Activated naive CD4-positive, alpha-beta T cell treated with anti-CD3 and anti-CD28 coated beads for 36 hours (primary cell): ENCODE measurements at regions of chr11 and their contacts with region 1.

Region 1: DNA sequence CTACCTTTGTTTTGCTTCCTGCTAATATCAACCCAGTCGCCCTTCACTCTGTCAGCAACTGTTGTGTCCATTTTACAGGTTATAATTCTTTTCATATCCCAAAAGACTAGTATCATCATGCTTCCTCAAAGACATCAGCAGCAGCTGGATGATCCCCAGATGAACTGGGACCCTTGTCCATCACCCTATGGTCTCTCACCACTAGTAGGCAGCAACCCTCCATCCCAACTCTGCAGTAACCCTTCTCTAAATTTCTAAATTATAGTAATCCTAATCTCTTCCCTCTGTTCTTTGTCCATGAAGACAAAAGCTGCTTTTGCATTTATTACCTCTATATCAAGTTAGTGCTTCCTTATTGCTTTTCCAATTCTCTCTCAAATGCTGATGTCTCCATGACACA is 1025.8 kb downstream of the FAM181B start:
- DNase-seq: peak; percentile 8
- H3K4me3 Mint-ChIP-seq: no peak overlapping the region
- H3K27ac Mint-ChIP-seq: no peak overlapping the region
- H3K4me1 Mint-ChIP-seq: no peaks in the 10 kb centered on the region
- H3K27me3 Mint-ChIP-seq: peaks cover 2% of the 10 kb centered on the region

Region 2: DNA sequence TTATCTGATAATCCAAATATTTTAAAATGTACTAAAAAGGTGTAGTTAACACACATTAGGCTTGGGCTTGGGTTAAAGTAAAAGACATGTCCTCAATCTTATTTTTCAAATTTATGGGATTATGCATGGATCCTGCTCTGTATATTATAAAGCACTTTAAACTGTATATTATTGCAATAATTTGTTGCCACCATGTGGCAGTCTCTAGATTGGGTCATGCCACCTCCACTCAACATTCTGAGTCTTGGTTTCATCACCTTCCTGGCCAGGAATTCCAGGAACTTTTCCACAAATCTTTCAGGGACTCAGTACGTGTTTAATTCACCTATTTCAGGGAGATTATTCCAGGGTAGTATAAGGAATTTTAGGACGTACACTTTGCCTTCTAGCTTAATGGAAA is 330.3 kb after region 1 on chr11:
- CTCF ChIA-PET with region 1: interaction called, 3 read pairs
- intact Hi-C with region 1: loop called (anchors 2 kb)
- DNase-seq: no peak
- H3K4me3 Mint-ChIP-seq: no peak overlapping the region
- H3K27ac Mint-ChIP-seq: no peak overlapping the region
- H3K4me1 Mint-ChIP-seq: no peaks in the 10 kb centered on the region
- H3K27me3 Mint-ChIP-seq: no peaks in the 10 kb centered on the region

Region 3: GRCh38 chr11:82229341-82229740 is 521.5 kb after region 1 on chr11:
- CTCF ChIA-PET with region 1: interaction called, 3 read pairs
- intact Hi-C with region 1: loop called (anchors 2 kb)
- DNase-seq: no peak
- H3K4me3 Mint-ChIP-seq: no peak overlapping the region
- H3K27ac Mint-ChIP-seq: no peak overlapping the region
- H3K4me1 Mint-ChIP-seq: no peaks in the 10 kb centered on the region
- H3K27me3 Mint-ChIP-seq: no peaks in the 10 kb centered on the region